B cell (primary cell): ENCODE measurements at regions of chr12 and their contacts with region 1.

Region 1: GRCh38 chr12:26832822-26833742 is at the start of gene ITPR2:
- DNase-seq: peak; percentile 95
- ATAC-seq: peak; percentile 88
- H3K4me3 ChIP-seq: peak within 1 kb of the TSS; percentile 67 to 97 (median 95)
- H3K4me3 Mint-ChIP-seq: peak within 1 kb of the TSS; percentile 98
- H3K27ac ChIP-seq: peak within 1 kb of the TSS; percentile 90 to 92
- H3K27ac Mint-ChIP-seq: peak within 1 kb of the TSS; percentile 100
- H3K4me1 ChIP-seq: peaks cover 15 to 21% of the 10 kb centered on the region in 2 donors
- H3K4me1 Mint-ChIP-seq: peaks cover 49% of the 10 kb centered on the region
- H3K27me3 ChIP-seq: no peaks in the 10 kb centered on the region
- H3K27me3 Mint-ChIP-seq: no peaks in the 10 kb centered on the region
- CTCF ChIP-seq: peak; percentile 56
- total RNA-seq, gene ITPR2: 113 and 122 TPM in 2 replicates

Region 2: DNA sequence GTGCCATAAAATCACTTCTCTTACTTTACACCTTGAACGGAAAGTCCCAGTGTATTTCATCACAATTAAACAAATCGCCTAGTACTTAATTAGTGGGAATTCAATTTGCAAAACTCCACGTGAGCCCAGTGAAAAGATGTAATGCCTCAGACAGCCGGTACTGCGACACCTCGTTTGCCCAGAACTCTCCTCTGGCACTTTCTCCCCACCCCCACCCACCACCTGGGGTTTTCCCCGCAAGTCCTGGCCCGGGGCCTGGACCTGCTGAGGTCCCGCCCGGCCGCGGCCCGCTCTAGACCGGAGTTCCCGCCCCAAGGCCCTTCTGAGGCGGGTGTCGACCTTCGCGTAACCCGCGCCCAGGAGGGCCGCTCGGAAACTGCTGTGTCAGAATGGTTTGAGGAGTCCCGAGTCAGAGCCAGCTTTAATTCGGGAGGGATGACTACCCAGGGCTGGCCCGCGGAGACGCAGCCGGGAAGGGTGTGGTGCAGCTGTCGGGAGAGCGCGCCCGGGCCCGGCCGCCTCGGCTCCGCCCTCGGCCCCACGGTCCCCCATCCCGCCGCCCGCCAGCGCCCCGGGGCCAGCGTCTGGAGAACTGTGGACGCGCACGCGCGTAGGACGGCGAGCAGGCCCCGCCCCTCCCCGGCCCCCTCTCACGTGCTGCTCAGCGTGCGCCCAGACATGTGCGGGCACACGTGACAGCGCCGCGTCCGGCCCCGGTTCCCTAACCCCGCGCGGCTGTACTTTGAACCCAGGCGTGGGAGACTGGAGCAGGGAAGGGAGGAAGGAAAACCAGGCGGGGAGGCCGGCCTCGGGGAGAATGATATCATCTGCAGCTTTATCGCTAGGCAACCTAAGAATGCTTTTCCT is 719.0 kb before region 1 on chr12:
- CTCF ChIA-PET with region 1: no interaction called
- POLR2A ChIA-PET with region 1: no interaction called
- intact Hi-C with region 1: loop called (anchors 2 kb)
- DNase-seq: peak; percentile 94
- ATAC-seq: peak; percentile 80
- H3K4me3 ChIP-seq: peak overlapping the region in 4 of 5 experiments; percentile 67 to 80 (median 70)
- H3K4me3 Mint-ChIP-seq: peak overlapping the region; percentile 87
- H3K27ac ChIP-seq: peak overlapping the region; percentile 91 to 95
- H3K27ac Mint-ChIP-seq: peak overlapping the region; percentile 75
- H3K4me1 ChIP-seq: peaks cover 36 to 47% of the 10 kb centered on the region in 2 donors
- H3K4me1 Mint-ChIP-seq: peaks cover 49% of the 10 kb centered on the region
- H3K27me3 ChIP-seq: no peaks in the 10 kb centered on the region
- H3K27me3 Mint-ChIP-seq: no peaks in the 10 kb centered on the region
- CTCF ChIP-seq: peak; percentile 48

Region 3: GRCh38 chr12:26723379-26724308 is 109.4 kb before region 1 on chr12:
- CTCF ChIA-PET with region 1: no interaction called
- POLR2A ChIA-PET with region 1: no interaction called
- intact Hi-C with region 1: loop called (anchors 10 kb)
- DNase-seq: no peak
- ATAC-seq: no peak
- H3K4me3 ChIP-seq: no peak overlapping the region
- H3K4me3 Mint-ChIP-seq: no peak overlapping the region
- H3K27ac ChIP-seq: no peak overlapping the region
- H3K27ac Mint-ChIP-seq: no peak overlapping the region
- H3K4me1 ChIP-seq: peaks cover 0 to 3% of the 10 kb centered on the region in 2 donors
- H3K4me1 Mint-ChIP-seq: peaks cover 19% of the 10 kb centered on the region
- H3K27me3 ChIP-seq: no peaks in the 10 kb centered on the region
- H3K27me3 Mint-ChIP-seq: no peaks in the 10 kb centered on the region
- CTCF ChIP-seq: no peak

Region 4: DNA sequence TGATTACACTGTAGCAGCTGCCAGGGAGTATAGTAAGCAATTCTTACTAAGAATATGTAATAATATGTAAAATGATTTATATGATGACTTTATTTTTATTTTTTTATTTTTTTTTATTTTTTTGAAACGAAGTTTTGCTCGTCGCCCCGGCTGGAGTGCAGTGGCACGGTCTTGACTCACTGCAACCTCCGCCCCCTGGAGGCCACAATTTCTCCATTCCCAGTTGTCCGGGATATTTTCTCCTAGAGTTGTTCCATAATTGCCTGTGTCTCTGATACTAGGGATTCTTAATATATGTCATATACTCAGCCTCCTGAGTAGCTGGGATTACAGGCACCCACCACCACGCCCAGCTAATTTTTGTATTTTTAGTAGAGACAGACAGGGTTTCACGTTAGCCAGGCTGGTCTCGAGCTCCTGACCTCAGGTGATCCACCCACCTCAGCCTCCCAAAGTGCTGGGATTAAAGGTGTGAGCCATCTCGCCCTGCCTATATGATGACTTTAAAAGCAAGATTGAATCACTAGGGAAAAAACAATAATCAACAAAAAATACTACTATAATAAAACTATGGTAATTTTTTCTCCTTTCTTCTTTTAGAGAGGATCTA is 12.1 kb after region 1 on chr12:
- CTCF ChIA-PET with region 1: interaction called, 68 read pairs
- POLR2A ChIA-PET with region 1: interaction called, 5 read pairs
- intact Hi-C with region 1: loop called (anchors 1 kb)
- DNase-seq: peak; percentile 30
- ATAC-seq: no peak
- H3K4me3 ChIP-seq: no peak overlapping the region
- H3K4me3 Mint-ChIP-seq: no peak overlapping the region
- H3K27ac ChIP-seq: no peak overlapping the region
- H3K27ac Mint-ChIP-seq: no peak overlapping the region
- H3K4me1 ChIP-seq: peaks cover 12 to 15% of the 10 kb centered on the region in 2 donors
- H3K4me1 Mint-ChIP-seq: peaks cover 20% of the 10 kb centered on the region
- H3K27me3 ChIP-seq: no peaks in the 10 kb centered on the region
- H3K27me3 Mint-ChIP-seq: no peaks in the 10 kb centered on the region
- CTCF ChIP-seq: peak; percentile 53

Region 5: DNA sequence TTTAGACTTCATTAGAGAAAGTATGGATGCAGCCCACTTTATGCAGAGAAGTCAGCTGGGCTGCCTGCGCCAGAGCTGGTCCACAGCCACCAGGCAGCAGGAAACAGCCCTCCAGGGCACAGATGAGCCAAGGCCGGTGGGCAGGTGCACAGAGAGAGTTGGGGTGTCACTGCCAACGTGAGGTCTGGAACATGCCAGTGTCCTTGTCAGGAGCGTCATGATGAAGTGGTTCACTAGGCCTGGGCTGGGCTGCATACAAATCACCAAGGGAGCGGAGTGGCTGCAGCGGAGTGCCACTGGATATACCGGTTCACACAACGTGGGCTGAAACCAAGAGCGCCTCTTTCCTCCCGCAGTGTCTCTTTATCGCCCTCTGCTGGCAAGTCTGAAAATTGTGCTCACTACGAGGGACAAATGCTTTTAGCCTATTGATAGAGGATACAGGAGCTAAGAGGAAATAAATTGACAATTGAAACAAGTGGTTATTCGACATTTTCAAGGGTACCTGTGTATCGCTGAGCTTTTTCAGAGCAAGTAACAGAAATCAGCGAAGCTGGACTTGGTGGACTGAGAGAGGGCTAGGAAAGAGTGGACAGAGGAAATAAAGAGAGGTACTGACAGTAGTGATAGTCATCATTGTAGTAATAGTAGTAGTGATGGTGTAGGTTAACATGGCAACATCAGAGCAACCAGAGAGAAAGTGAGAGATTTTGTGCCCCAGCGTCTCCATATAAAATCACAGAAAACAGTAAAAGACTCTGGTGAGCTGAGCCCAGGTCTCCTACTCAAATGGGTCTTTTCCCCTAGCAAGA is 51.9 kb after region 1 on chr12:
- CTCF ChIA-PET with region 1: interaction called, 23 read pairs
- POLR2A ChIA-PET with region 1: no interaction called
- intact Hi-C with region 1: loop called (anchors 1 kb)
- DNase-seq: peak; percentile 89
- ATAC-seq: peak; percentile 96
- H3K4me3 ChIP-seq: peak overlapping the region in 2 of 5 experiments; percentile 3 to 26
- H3K4me3 Mint-ChIP-seq: peak overlapping the region; percentile 67
- H3K27ac ChIP-seq: no peak overlapping the region
- H3K27ac Mint-ChIP-seq: no peak overlapping the region
- H3K4me1 ChIP-seq: peaks cover 4 to 8% of the 10 kb centered on the region in 2 donors
- H3K4me1 Mint-ChIP-seq: peaks cover 9% of the 10 kb centered on the region
- H3K27me3 ChIP-seq: no peaks in the 10 kb centered on the region
- H3K27me3 Mint-ChIP-seq: no peaks in the 10 kb centered on the region
- CTCF ChIP-seq: peak; percentile 97

Region 6: DNA sequence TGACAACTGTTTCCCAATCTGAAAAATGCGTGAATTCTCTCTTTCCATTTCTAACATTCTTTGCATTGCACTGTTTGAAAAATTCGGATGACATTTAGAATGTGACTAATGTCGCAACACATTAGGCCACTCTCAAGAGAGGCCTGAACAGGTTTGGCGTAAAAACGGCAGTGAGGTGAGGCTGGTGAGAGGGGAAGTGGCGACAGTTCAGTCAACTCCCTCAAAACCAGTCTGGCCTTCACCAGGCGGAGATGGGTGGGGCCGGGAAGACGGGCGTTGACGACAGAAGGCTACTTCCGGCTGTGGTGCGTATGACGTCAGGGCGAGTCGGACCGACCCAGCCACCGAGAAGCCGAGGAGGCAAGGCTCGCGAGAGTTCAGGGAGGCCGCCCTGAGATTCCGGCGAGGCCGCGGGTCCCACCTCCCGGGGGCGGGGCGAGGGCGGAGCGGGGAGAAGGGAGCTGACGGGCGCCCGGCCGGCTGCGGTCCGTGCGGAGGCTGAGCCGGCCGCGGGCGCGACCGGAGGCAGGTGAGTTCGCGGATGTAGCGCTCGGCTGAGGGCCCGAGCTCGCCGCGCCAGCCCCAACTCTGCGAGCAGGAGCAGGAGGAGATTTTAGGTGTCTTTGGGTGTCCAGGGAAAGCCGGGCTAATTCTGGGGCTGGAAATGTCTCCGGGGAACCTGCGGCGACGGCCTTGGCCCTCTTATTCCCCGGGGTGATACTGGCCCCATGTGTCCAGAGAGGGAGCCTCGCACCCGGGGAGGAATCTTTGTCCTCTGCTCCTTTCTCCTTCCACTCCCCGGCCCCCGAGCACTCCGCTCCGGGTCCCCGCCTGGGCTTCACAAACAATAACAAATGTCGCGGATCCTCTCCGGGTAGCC is 411.0 kb after region 1 on chr12 and contains the start of gene STK38L:
- CTCF ChIA-PET with region 1: no interaction called
- POLR2A ChIA-PET with region 1: no interaction called
- intact Hi-C with region 1: loop called (anchors 1 kb)
- DNase-seq: peak; percentile 97
- ATAC-seq: peak; percentile 97
- H3K4me3 ChIP-seq: peak within 1 kb of the TSS; percentile 48 to 97 (median 88)
- H3K4me3 Mint-ChIP-seq: peak within 1 kb of the TSS; percentile 98
- H3K27ac ChIP-seq: peak within 1 kb of the TSS; percentile 66 to 89
- H3K27ac Mint-ChIP-seq: peak within 1 kb of the TSS; percentile 95
- H3K4me1 ChIP-seq: peaks cover 17 to 20% of the 10 kb centered on the region in 2 donors
- H3K4me1 Mint-ChIP-seq: peaks cover 38% of the 10 kb centered on the region
- H3K27me3 ChIP-seq: no peaks in the 10 kb centered on the region
- H3K27me3 Mint-ChIP-seq: no peaks in the 10 kb centered on the region
- CTCF ChIP-seq: no peak
- total RNA-seq, gene STK38L: 19.9 and 21.2 TPM in 2 replicates